Activated T-helper 2 cell treated with anti-CD3 and anti-CD28 coated beads, Interferon-gamma antibody, Interleukin-2, Interleukin-4, amounts not matched to agents 10 μg/mL and 5 μg/mL and 100 μg/mL, durations not matched to agents 14 hours and 24 hours and 36 hours (primary cell): ENCODE measurements at regions of chr9 and their contacts with region 1.

Region 1: GRCh38 chr9:114587385-114588202 is at the start of gene ATP6V1G1:
- DNase-seq: peak; percentile 99
- H3K4me3 Mint-ChIP-seq: peak within 1 kb of the TSS; percentile 98
- H3K27ac Mint-ChIP-seq: peak within 1 kb of the TSS; percentile 98
- H3K4me1 Mint-ChIP-seq: peaks cover 40% of the 10 kb centered on the region
- H3K27me3 Mint-ChIP-seq: peaks cover 4% of the 10 kb centered on the region
- total RNA-seq, gene ATP6V1G1: 45.2 and 48.1 TPM in 2 replicates

Region 2: DNA sequence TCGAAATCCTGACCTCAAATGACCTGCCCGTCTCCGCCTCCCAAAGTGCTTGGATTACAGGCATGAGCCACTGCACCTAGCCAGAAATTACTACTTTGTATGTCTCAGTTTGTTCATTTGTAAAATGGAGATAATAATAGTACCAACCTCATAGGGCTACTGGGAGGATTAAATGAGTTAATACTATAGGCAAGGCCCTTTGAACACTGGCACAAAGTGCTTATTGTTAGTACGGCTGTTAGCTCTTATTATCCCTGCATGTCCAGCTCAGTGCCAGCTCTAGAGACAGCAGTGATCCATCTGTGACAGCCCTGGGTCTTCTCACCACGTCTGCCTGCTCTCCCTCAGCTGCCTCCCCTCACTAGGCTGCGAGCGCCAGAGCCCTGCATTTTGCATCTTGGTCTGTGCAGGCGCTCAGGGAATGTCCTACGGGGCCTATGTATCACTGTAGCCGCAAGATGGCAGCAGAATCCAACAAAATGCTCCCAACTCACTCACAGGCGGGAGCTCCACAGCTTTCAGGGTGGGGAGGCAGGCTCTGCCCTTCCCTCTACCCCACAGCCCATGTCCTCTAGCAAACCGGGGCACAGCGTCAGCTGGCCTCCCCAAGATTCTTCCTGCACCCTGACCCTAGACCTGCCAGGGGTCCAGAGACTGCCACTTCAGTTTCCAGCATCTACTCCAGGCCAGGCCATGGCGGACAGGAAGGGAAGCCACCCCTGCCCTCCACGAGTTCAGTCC is 182.1 kb before region 1 on chr9:
- intact Hi-C with region 1: loop called (anchors 2 kb)
- DNase-seq: peak; percentile 71
- H3K4me3 Mint-ChIP-seq: no peak overlapping the region
- H3K27ac Mint-ChIP-seq: no peak overlapping the region
- H3K4me1 Mint-ChIP-seq: peaks cover 6% of the 10 kb centered on the region
- H3K27me3 Mint-ChIP-seq: no peaks in the 10 kb centered on the region

Region 3: GRCh38 chr9:114505187-114506081 is 82.2 kb before region 1 on chr9 and contains the start of gene WHRN:
- intact Hi-C with region 1: loop called (anchors 5 kb)
- DNase-seq: peak; percentile 85
- H3K4me3 Mint-ChIP-seq: peak within 1 kb of the TSS; percentile 78
- H3K27ac Mint-ChIP-seq: peak within 1 kb of the TSS; percentile 38
- H3K4me1 Mint-ChIP-seq: peaks cover 14% of the 10 kb centered on the region
- H3K27me3 Mint-ChIP-seq: peaks cover 64% of the 10 kb centered on the region
- total RNA-seq, gene WHRN: 2.8 and 2.9 TPM in 2 replicates

Region 4: DNA sequence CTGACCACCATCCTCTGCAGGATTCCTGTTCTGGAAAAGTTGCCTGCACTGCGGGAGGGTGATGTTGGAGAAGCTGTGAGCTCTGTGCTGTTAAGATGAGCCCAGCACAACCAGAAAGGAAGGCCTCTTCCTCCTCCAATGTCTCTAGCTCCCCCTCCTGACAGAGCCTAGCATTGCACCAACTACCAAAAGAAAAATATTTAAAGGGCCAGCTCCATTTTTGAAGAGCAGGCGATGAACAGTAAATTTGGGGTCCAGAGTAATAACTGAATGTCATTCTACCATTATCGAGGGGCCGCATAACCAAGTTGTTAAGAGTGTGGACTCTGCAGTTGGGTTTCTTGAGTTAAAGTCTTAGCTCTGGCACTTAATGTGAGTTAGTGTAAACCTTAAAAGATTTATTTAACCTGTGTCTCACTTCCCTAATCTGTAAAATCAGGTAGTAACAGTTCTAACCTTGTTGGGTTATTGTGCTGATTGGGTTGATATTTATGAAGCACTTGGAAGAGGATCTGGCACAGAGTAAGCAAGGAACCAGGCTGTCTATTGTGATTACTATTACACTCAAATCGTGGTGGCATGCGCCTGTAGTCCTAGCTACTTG is 66.1 kb after region 1 on chr9:
- intact Hi-C with region 1: loop called (anchors 1 kb)
- DNase-seq: peak; percentile 73
- H3K4me3 Mint-ChIP-seq: no peak overlapping the region
- H3K27ac Mint-ChIP-seq: no peak overlapping the region
- H3K4me1 Mint-ChIP-seq: peaks cover 21% of the 10 kb centered on the region
- H3K27me3 Mint-ChIP-seq: no peaks in the 10 kb centered on the region

Region 5: DNA sequence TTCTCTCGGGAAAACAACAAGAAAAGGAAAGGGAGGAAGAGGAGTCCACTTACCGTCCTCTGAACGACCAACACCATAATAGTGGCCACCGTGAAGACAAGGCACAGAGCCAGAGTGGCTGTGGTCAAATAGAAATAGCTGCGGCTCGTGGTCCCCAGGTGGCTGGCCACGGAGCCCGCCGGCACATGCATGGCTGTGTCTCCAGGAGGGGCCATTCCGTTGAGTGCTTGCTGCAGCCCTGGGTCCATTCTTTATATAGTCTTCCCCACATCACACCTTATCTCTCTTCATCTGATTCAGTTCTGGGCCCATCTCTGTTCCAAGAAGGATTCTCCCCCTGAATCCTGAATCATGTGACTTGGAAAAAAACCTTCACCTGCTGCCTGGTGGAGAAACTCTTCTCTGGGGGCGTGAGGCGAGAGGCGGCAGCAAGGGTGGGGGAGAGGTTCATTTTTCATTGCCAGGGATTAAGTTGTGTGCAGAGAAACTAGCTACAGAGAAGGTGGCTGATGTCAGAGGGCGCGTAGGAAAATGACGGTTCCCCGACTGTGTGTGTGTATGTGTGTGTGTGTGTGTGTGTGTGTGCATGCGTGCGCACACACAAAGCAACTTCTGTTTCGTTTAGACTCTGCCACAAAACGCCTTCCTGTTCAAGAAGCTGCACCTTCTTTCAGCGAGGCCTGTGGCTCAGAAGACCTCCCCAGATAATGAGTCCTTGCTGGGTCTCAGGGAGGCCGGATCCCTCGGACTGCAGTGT is 342.6 kb after region 1 on chr9 and contains the start of gene TNFSF8:
- intact Hi-C with region 1: no loop called
- DNase-seq: peak; percentile 79
- H3K4me3 Mint-ChIP-seq: peak within 1 kb of the TSS; percentile 98
- H3K27ac Mint-ChIP-seq: peak within 1 kb of the TSS; percentile 98
- H3K4me1 Mint-ChIP-seq: peaks cover 47% of the 10 kb centered on the region
- H3K27me3 Mint-ChIP-seq: no peaks in the 10 kb centered on the region
- total RNA-seq, gene TNFSF8: 73.6 and 82.3 TPM in 2 replicates

Region 6: DNA sequence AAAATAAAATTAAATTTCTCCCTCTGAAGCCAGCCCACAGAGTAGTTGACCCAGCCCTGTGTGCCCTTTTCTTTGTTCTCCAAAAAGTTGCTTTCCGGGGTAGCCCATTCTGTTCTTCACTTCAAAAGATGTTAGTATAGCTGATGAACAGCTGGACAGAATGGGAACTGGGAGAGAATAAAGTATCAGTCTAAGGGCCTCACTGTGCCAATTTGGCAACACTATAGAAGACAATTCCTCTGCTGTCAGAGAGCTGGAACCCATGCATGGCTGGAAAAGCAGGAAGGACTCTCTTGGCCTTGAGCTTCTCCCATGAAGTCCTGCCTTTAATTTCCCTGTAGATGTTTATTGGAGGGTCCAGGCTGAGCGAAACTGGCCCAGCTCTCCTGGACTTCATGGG is 353.8 kb after region 1 on chr9:
- intact Hi-C with region 1: no loop called
- DNase-seq: no peak
- H3K4me3 Mint-ChIP-seq: no peak overlapping the region
- H3K27ac Mint-ChIP-seq: no peak overlapping the region
- H3K4me1 Mint-ChIP-seq: peaks cover 18% of the 10 kb centered on the region
- H3K27me3 Mint-ChIP-seq: peaks cover 2% of the 10 kb centered on the region